Left colon (tissue), 2 donors: ENCODE measurements at regions of chr5 and their contacts with region 1.

Region 1: GRCh38 chr5:141878711-141879425 is 658 bp upstream of the PCDH1 start:
- DNase-seq: peak; percentile 89 to 93
- ATAC-seq: peak; percentile 43

Region 2: DNA sequence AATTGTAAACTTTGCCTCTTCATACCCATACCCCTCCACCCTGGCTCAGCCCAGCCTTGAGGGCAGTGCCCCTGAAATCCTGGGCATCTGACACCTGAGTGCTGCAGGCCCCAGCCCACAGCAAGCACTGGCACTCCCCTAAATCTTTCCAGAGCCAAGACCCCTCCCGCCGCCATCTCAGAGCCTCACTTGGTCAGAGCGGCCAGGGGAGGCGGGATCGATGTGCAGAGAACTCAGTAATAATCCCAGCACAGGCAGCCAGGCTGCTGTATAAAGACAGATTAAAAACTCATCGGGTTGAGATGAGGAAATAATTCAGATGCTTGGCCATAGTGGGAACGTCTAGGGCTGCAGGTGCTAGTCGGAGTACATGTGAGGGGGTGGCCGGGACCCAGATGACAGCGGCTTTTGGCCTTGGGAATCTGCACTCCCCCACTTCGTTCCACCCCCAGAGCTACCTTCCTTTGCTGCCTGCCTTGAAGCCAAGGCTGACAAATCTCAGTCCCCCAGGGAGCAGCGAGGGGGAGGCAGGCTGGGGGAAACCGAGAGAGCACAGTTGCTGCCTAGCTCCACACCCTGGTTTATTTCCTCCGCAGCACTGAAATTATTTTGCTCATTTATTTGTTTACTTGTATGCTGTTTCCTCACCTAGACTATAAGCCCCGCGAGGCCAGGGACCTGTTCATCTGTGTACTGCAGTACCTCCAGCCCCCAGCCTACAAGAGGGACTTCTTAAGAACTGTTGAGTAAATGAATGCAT is 177.3 kb before region 1 on chr5:
- intact Hi-C with region 1: loop called (anchors 5 kb)
- DNase-seq: no peak
- ATAC-seq: no peak

Region 3: DNA sequence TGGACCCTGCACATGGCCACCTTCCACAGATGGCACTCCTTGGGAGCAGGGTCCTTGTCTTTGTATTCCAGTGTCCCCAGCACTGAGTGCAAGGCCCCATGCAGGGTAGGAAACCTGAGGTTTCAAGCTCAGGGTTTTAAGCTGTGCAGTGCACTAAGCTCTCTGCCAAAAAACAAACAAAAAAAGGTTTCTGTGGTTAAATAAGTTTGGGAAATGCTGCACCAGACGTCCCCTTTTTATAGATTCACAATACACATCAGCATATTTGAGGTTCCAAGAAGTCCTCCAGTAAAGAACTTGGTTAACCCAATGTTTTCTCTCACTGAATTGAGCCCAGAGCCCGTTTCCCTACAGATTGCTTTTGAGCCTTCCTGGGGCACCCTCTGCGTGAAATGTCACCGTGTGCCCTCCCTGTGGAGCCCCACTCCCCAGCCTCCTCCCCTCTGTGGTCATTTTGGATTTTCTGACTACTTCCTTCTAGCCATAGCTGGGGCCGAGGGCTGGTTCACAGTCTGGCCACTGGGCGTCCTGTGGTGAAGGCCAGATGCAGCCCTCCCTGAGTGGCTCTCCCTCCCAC is 61.9 kb after region 1 on chr5:
- intact Hi-C with region 1: no loop called
- DNase-seq: no peak
- ATAC-seq: peak; percentile 37

Region 4: GRCh38 chr5:142087920-142088679 is 209.2 kb after region 1 on chr5:
- intact Hi-C with region 1: no loop called
- DNase-seq: no peak
- ATAC-seq: no peak

Region 5: DNA sequence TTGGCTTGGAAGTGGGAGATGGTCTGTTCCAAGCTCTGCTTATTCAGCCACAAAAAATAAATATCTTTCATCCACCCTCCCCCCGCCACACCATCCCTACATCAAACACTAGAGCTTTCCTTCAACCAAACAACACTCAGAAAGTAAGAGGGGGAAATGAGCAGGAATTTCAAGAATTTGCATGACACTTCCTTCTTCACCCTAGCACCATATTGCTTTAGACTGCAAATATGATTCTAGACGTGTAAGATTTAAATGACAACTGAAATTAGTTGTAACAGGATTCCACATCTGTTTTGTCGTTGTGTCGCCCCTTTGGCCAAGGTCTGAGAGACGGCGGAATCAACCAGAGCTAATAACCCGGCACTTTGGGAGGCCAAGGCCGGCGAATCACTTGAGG is 318.2 kb after region 1 on chr5:
- intact Hi-C with region 1: no loop called
- DNase-seq: no peak
- ATAC-seq: no peak

Region 6: GRCh38 chr5:142253938-142254337 is 375.1 kb after region 1 on chr5:
- intact Hi-C with region 1: no loop called
- DNase-seq: no peak
- ATAC-seq: no peak